ENCODE measurements at regions of chr3 and their contacts with region 1.

Region 1: GRCh38 chr3:16370872-16371740 is 106.1 kb downstream of the OXNAD1 start:
- DNase-seq: no peak
- ATAC-seq: no peak
- H3K4me3 ChIP-seq: no peak overlapping the region
- H3K4me3 Mint-ChIP-seq: peak overlapping the region in 6 of 10 donors; percentile 4 to 49 (median 20)
- H3K27ac ChIP-seq: no peak overlapping the region
- H3K27ac Mint-ChIP-seq: peak overlapping the region; percentile 34 to 91 (median 82)
- H3K4me1 ChIP-seq: peaks cover 0 to 33% of the 10 kb centered on the region in 2 donors
- H3K4me1 Mint-ChIP-seq: peaks cover 33 to 86% (median 80%) of the 10 kb centered on the region in 7 donors
- H3K27me3 ChIP-seq: no peaks in the 10 kb centered on the region
- H3K27me3 Mint-ChIP-seq: no peaks in the 10 kb centered on the region

Region 2: DNA sequence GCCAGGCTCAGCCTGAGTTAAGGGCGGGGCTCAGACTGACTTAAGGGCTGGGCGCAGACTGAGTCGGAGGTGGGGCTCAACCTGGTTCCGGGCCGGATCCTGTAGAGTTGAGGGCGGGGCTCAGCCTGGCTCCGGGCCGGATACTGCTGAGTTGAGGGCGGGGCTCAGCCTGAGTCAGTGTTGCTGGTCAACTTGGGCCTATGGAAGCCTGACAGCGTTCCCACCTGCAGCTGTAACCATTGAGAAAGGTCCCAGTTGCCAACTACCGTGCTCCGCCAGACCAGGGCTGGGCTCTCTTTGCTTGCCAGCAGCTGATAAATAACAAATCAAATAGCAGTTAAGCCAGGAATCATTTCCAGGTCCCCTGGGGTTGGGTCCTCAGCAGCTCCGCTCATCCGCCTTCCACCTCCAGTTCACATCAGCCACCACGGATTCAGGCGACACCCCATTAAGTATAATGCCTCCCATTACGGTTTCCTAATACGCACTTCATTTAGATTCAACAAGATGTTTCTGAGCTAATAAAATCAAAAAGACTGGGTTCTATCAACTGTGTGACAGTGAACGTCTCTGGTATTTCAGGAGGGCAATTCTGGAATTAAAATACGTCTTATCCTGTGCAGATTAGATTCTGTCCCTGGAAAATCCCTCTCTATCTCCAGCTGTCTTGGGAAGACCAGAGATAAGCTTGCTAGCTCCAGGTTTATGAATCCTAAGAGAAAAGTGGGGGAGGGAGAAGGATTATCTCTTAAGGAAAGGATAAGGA is 1838.2 kb before region 1 on chr3:
- CTCF ChIA-PET with region 1: no interaction called
- POLR2A ChIA-PET with region 1: no interaction called
- intact Hi-C with region 1: no loop called
- DNase-seq: no peak
- ATAC-seq: no peak
- H3K4me3 ChIP-seq: no peak overlapping the region
- H3K4me3 Mint-ChIP-seq: no peak overlapping the region
- H3K27ac ChIP-seq: no peak overlapping the region
- H3K27ac Mint-ChIP-seq: no peak overlapping the region
- H3K4me1 ChIP-seq: no peaks in the 10 kb centered on the region
- H3K4me1 Mint-ChIP-seq: peaks cover 0 to 1% (median 0%) of the 10 kb centered on the region in 7 donors
- H3K27me3 ChIP-seq: no peaks in the 10 kb centered on the region
- H3K27me3 Mint-ChIP-seq: peaks cover 0 to 11% (median 8%) of the 10 kb centered on the region in 5 donors

Region 3: GRCh38 chr3:16361087-16361486 is 10.0 kb before region 1 on chr3:
- CTCF ChIA-PET with region 1: no interaction called
- POLR2A ChIA-PET with region 1: no interaction called
- intact Hi-C with region 1: loop called in 1 of 2 experiments (anchors 2 kb)
- DNase-seq: no peak
- ATAC-seq: no peak
- H3K4me3 ChIP-seq: no peak overlapping the region
- H3K4me3 Mint-ChIP-seq: no peak overlapping the region
- H3K27ac ChIP-seq: no peak overlapping the region
- H3K27ac Mint-ChIP-seq: peak overlapping the region in 8 of 9 donors; percentile 1 to 66 (median 28)
- H3K4me1 ChIP-seq: no peaks in the 10 kb centered on the region
- H3K4me1 Mint-ChIP-seq: peaks cover 14 to 56% (median 49%) of the 10 kb centered on the region in 7 donors
- H3K27me3 ChIP-seq: no peaks in the 10 kb centered on the region
- H3K27me3 Mint-ChIP-seq: no peaks in the 10 kb centered on the region

Region 4: GRCh38 chr3:16402451-16402850 is 31.3 kb after region 1 on chr3:
- CTCF ChIA-PET with region 1: no interaction called
- POLR2A ChIA-PET with region 1: no interaction called
- intact Hi-C with region 1: no loop called
- DNase-seq: no peak
- ATAC-seq: no peak
- H3K4me3 ChIP-seq: no peak overlapping the region
- H3K4me3 Mint-ChIP-seq: no peak overlapping the region
- H3K27ac ChIP-seq: no peak overlapping the region
- H3K27ac Mint-ChIP-seq: peak overlapping the region in 4 of 9 donors; percentile 31 to 90 (median 42)
- H3K4me1 ChIP-seq: no peaks in the 10 kb centered on the region
- H3K4me1 Mint-ChIP-seq: peaks cover 21 to 42% (median 30%) of the 10 kb centered on the region in 7 donors
- H3K27me3 ChIP-seq: no peaks in the 10 kb centered on the region
- H3K27me3 Mint-ChIP-seq: no peaks in the 10 kb centered on the region